ENCODE measurements at regions of chr12 and their contacts with region 1.

Region 1: GRCh38 chr12:7859552-7859951 is 13.2 kb downstream of the SLC2A14 start:
- DNase-seq: no peak
- ATAC-seq: no peak
- H3K4me3 ChIP-seq: no peak overlapping the region
- H3K27ac ChIP-seq: no peak overlapping the region
- H3K4me1 ChIP-seq: peaks cover 10% of the 10 kb centered on the region; the same call in 1 of the 2 replicates
- H3K27me3 ChIP-seq: peaks cover 4% of the 10 kb centered on the region
- CTCF ChIP-seq: no peak

Region 2: GRCh38 chr12:7995266-7995963 is 135.9 kb after region 1 on chr12:
- CTCF ChIA-PET with region 1: no interaction called
- POLR2A ChIA-PET with region 1: no interaction called
- intact Hi-C with region 1: loop called (anchors 1 kb)
- DNase-seq: peak; percentile 73
- ATAC-seq: peak; percentile 98
- H3K4me3 ChIP-seq: no peak overlapping the region
- H3K27ac ChIP-seq: peak overlapping the region; percentile 75
- H3K4me1 ChIP-seq: peaks cover 4% of the 10 kb centered on the region
- H3K27me3 ChIP-seq: no peaks in the 10 kb centered on the region
- CTCF ChIP-seq: peak; percentile 78